Activated CD8-positive, alpha-beta T cell treated with anti-CD3 and anti-CD28 coated beads for 36 hours (primary cell): ENCODE measurements at regions of chr18 and their contacts with region 1.

Region 1: DNA sequence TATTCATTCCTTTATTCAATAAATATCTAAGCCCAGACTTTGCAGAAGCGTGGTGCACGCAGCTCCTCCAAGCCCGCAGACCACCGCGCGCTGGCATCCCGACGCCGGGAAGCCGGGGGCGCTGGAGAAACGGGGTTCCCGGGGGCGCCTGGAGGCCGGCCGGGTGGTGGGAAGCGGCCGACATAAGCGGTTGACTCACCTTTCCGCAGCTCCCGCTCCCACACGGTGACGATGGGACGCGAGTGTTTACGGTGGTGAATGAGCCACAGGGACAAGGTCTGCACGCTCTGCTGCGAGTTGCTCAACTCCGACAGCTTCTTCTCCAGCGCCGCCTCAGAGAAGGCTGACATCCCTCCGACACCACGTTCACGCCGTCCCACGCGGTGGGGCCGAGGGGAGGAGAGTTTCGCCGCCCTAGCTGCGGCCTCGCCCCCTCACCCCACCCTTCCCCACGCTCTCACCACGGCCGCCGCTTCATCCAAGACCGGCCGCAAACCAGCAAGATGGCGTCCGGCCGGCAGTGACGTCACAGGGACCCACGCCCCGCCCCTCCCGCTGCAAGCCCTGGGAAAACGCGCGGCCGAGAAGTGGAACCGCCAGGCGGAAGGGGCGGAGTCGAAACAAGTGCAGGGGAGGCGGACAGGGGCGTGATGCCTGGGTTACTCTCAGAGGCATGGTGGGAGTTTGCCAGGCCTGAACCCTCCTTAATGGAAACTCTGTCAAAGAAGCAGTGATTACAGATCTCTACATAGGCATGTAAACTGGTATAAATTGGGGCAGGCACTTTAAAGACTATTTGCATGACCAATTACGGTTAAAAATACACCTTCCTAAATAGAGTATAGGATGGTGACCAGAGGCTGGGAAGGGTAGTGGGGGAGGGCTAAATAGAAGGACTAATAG is at the start of gene RPRD1A:
- DNase-seq: peak; percentile 99
- ATAC-seq: peak; percentile 97
- H3K4me3 Mint-ChIP-seq: peak within 1 kb of the TSS; percentile 92
- H3K27ac Mint-ChIP-seq: peak within 1 kb of the TSS; percentile 95
- H3K4me1 Mint-ChIP-seq: peaks cover 34% of the 10 kb centered on the region
- H3K27me3 Mint-ChIP-seq: peaks cover 1% of the 10 kb centered on the region
- CTCF ChIP-seq: no peak
- total RNA-seq, gene RPRD1A: 29.4 to 31.9 TPM

Region 2: GRCh38 chr18:36028859-36029258 is 38.4 kb before region 1 on chr18:
- CTCF ChIA-PET with region 1: no interaction called
- POLR2A ChIA-PET with region 1: no interaction called
- intact Hi-C with region 1: no loop called
- DNase-seq: no peak
- ATAC-seq: no peak
- H3K4me3 Mint-ChIP-seq: no peak overlapping the region
- H3K27ac Mint-ChIP-seq: peak overlapping the region; percentile 4
- H3K4me1 Mint-ChIP-seq: peaks cover 10% of the 10 kb centered on the region
- H3K27me3 Mint-ChIP-seq: no peaks in the 10 kb centered on the region
- CTCF ChIP-seq: no peak

Region 3: DNA sequence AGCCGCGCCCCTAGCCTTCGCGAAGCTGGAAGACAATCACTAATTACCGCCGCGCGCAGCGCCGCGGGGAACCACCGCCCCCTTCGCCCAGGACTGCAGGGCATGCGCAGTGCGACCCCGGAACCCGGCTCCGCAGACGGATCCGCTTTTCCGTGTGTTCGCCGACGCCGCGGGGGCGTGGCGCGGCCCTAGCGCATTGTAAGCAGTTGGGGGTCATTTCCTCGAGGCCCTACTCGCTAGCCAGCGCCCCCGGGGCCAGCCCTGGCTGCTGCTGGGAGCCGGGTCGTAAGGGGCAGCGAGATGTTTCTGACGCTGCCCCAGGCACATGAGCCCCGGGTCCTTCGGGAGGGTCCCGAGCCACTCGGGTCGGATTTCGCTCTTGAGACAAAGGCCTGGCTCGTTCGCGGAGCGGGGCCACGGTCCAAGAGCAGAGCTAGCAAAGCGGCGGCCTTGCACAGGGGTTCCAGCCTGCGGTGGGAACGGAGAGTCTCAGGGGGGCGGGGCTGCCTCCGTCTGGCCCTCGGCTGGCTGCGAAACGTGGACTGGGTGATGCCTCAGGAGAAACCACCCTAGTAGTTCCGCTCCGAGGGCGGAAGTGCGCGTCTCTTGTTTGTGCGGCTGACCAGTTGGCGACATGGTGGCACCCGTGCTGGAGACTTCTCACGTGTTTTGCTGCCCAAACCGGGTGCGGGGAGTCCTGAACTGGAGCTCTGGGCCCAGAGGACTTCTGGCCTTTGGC is 62.2 kb after region 1 on chr18 and contains the starts of genes ELP2 and SLC39A6:
- CTCF ChIA-PET with region 1: no interaction called
- POLR2A ChIA-PET with region 1: interaction called, 17 read pairs
- intact Hi-C with region 1: no loop called
- DNase-seq: peak; percentile 96
- ATAC-seq: peak; percentile 92
- H3K4me3 Mint-ChIP-seq: peak within 1 kb of the TSS; percentile 93
- H3K27ac Mint-ChIP-seq: peak within 1 kb of the TSS; percentile 95
- H3K4me1 Mint-ChIP-seq: peaks cover 56% of the 10 kb centered on the region
- H3K27me3 Mint-ChIP-seq: no peaks in the 10 kb centered on the region
- CTCF ChIP-seq: no peak
- total RNA-seq, gene ELP2: 98.8 to 105 TPM
- total RNA-seq, gene SLC39A6: 20.6 to 20.8 TPM